GM13976 (cell line): ENCODE measurements at regions of chrX and their contacts with region 1.

Region 1: DNA sequence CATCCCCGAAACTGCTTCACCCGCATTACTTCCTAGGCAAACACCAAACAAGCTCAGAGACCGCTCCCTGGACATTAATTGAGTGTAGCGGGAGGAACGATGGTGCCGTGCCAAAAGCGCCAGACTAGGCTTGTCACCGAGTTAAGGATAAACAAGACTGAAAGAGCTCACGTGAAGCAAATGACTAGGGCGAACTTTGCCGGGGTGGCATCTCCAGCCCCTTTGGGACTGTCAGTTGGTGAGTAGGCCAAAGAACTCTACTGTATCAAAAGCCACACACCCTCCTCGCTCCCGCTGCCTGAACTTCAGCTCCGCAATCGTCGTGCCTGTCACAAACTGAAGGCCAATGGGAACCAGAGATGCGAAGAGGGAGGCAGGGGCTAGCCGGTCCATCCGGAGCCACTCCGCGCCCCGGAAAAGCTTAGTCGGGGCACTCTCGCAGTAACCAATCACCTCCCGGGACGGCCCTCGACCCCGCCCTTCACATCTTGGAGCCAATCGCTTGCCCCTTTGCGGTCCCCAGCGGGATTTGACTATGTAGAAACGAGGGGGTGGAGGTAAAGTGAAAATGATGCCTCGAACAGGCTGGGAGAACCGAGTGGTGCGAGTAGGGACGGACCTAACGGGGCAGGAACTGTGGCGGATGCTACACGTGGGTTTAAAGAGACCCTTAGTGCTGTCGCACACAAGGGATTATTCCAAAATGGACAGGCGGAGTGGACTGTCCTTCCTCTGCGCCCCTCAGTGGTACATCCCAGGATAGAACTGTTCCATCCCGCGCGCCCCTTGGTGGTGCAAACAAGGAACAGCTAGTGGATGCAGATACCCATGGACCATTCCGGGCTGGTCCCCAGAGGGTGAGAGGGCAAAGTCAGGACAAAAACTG is 37.1 kb upstream of the FAM156A start:
- DNase-seq: peak; percentile 86
- CTCF ChIP-seq: peak; percentile 55

Region 2: DNA sequence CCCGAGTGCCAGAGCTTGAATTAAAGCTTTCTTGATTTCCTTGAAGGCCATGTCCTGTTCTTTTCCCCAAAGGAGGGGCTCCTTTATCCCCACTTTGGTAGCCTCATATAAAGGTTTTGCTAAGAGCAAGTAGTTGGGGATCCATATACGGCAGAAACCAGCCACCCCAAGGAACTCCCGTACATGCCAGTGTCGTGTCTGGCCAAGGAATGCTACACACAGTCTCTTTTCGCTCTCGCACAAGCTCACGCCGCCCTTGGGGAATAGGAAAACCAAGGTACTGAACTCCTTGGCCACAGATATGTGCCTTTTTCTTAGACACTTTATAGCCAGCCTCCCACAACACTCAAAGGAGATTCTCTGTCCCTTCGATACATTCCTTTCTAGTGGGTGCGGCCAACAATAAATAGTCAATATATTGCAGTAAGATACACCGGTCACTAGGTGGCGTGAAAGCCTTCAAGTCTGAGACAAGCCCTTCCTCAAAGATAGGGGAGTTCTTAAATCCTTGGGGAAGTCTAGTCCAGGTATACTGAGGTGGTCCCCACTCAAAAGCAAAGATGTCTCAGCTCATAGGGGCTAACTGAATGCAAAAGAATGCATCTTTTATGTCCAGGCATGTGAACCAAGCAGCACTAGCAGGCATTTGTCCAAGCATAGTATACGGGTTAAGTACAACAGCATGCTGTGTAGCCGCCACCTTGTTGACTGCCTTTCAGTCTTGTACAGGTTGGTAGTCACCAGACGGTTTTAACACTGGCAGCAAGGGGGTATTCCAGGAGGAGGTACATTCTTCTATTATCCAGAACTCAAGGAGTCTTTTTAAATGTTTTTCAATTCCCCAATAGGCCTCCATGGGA is 420.7 kb before region 1 on chrX:
- in situ Hi-C with region 1: loop called (anchors 25 kb)
- DNase-seq: peak; percentile 41
- CTCF ChIP-seq: peak; percentile 60

Region 3: DNA sequence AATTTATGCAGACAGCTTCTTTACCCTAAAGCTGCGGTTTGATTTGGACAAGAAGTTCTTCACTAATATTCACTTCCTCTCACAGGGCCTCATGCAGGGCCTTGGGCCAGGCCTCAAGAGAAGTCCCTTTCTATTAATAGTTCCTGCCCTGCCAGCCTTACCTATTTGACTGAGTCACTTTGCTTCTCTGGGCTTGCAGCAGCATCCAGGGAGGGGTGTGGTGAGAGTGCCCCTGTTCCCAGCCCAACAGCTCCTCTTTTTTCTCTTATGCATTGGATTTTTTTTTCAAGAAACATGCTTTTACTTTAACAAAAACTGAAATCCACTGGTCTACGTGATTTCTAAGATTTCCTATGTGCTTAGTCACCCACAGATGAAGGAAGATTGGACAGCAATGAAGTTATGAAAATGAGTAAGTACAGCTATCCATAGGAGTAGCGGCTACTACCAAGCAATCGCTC is 71.6 kb before region 1 on chrX:
- in situ Hi-C with region 1: no loop called
- DNase-seq: no peak
- CTCF ChIP-seq: no peak